ENCODE measurements at regions of chr7 and their contacts with region 1.

Region 1: DNA sequence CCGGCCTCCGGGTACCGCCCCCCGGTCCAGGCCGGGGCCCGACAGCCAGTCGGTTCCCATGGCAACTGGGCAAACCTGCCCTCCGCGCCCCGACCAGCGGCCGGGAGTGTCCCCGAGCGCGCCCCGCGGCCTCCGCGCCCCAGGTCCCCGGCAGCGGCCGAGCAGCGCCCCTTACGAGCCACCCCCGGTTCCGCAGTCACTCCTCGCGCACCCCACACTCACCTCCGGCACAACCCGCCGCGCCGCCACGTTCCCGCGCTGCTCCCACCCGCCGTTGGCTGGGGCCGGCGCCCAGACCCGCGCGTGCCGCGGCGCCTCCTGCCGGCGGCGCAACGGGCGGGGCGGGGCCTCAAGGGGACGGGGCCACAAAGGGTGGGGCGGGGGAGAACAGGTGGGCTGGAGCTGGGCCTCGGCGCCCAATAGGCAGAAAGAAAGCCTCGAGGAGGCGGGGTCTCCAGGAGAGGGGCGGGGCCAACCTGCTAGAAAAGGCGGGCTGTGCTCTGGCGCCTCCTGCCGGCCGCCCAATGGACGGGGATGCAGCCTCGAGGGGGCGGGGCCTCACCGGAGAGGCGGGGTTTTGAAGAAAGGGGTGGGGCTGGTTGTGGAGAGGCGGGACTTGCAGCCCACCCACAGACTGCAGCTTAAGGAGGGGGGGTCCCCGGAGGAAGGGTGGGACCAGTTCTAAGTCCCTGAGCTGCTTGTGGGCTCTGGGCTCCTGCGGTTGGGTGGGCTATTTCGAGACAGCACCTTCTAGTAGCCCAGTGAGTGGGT is at the start of gene RADIL:
- DNase-seq: peak in 1 of 2 donors; percentile 92
- H3K4me3 ChIP-seq: peak within 1 kb of the TSS; percentile 57 to 81
- H3K27ac ChIP-seq: peak within 1 kb of the TSS; percentile 85
- H3K4me1 ChIP-seq: peaks cover 20% of the 10 kb centered on the region
- H3K27me3 ChIP-seq: no peaks in the 10 kb centered on the region
- CTCF ChIP-seq: peak; percentile 23 to 82 (median 65)
- POLR2A ChIP-seq: no peak
- total RNA-seq, gene RADIL: 16.5 TPM

Region 2: GRCh38 chr7:3128462-3129173 is 1754.9 kb before region 1 on chr7:
- intact Hi-C with region 1: loop called (anchors 5 kb)
- DNase-seq: no peak
- H3K4me3 ChIP-seq: no peak overlapping the region
- H3K27ac ChIP-seq: no peak overlapping the region
- H3K4me1 ChIP-seq: no peaks in the 10 kb centered on the region
- H3K27me3 ChIP-seq: no peaks in the 10 kb centered on the region
- CTCF ChIP-seq: no peak
- POLR2A ChIP-seq: no peak

Region 3: GRCh38 chr7:4797858-4798705 is 85.5 kb before region 1 on chr7:
- intact Hi-C with region 1: loop called (anchors 2 kb)
- DNase-seq: no peak
- H3K4me3 ChIP-seq: no peak overlapping the region
- H3K27ac ChIP-seq: no peak overlapping the region
- H3K4me1 ChIP-seq: peaks cover 8% of the 10 kb centered on the region
- H3K27me3 ChIP-seq: no peaks in the 10 kb centered on the region
- CTCF ChIP-seq: peak; percentile 35 to 76 (median 75)
- POLR2A ChIP-seq: no peak

Region 4: GRCh38 chr7:4819560-4820404 is 63.8 kb before region 1 on chr7:
- intact Hi-C with region 1: loop called (anchors 10 kb)
- DNase-seq: no peak
- H3K4me3 ChIP-seq: no peak overlapping the region
- H3K27ac ChIP-seq: peak overlapping the region; percentile 2
- H3K4me1 ChIP-seq: peaks cover 9% of the 10 kb centered on the region
- H3K27me3 ChIP-seq: no peaks in the 10 kb centered on the region
- CTCF ChIP-seq: no peak
- POLR2A ChIP-seq: no peak

Region 5: DNA sequence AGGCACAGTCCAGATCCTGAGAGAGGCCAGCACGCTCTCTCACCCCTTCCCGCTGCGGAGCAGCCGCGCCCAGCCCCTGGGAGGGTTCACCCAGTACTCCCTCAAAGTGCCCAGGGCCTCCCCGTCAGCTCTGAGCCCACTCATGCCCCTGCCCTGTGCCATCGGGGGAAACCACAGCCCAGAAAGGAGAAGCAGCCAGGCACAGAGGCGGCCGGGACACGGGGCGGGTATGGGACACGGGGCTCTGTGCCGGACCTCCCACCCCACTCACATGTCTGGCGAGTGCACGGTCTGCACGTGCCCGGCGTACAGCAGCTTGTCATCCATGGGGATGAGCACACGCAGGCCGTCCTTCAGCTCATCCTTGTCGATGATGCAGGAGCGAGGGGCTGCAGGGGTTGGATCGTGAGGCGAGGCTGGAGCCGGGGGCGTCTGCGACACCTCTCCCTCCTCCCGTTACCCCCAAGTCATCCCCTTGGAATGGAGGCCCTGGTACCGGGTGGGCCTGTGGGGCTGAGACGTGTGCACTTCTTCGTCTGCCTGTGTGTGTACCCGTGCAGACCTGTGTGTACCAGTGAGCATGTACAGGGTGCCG is 437.3 kb after region 1 on chr7:
- intact Hi-C with region 1: no loop called
- DNase-seq: no peak
- H3K4me3 ChIP-seq: no peak overlapping the region
- H3K27ac ChIP-seq: no peak overlapping the region
- H3K4me1 ChIP-seq: no peaks in the 10 kb centered on the region
- H3K27me3 ChIP-seq: no peaks in the 10 kb centered on the region
- CTCF ChIP-seq: no peak
- POLR2A ChIP-seq: no peak

Measured in vagina (tissue), 2 donors.